MCF 10A (cell line): ENCODE measurements at regions of chr1 and their contacts with region 1.

Region 1: DNA sequence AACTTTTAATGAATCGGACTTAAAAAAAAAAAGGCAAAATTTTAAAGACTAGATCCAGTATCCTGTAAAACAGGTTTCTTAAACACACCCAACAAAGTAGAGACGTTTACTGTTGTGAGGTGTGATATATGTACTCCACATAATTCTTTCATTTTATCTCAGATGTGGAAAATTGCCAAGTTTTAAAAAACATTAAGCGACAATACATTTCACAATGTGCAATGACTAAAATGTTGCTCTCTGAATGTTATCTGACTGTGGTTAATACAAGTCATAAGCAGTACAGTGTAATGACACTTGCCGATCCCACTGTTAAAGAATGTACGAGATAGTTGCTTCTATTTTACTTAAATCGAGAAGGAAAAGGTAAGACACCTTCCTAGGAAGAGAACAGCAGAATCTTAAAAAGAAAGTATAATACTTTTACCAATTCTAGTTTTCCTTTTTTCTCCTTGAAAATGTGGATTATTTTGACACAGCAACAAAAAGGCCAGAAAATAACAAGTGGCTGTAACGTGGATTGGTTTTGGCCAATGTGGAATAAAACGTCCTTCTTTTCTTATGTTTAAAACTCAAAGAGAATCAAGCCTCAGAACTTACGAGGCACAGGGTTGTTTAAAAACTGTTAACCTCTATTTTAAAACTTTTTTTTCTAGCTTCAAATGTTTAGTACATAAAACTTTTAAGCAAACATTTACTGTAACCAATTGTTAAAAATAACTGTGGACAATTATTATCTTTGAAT is 51.4 kb downstream of the TP53BP2 start:
- DNase-seq: no peak
- H3K4me3 Mint-ChIP-seq: no peak overlapping the region
- H3K27ac Mint-ChIP-seq: no peak overlapping the region
- H3K4me1 Mint-ChIP-seq: no peaks in the 10 kb centered on the region
- H3K27me3 Mint-ChIP-seq: no peaks in the 10 kb centered on the region
- CTCF ChIP-seq: no peak

Region 2: DNA sequence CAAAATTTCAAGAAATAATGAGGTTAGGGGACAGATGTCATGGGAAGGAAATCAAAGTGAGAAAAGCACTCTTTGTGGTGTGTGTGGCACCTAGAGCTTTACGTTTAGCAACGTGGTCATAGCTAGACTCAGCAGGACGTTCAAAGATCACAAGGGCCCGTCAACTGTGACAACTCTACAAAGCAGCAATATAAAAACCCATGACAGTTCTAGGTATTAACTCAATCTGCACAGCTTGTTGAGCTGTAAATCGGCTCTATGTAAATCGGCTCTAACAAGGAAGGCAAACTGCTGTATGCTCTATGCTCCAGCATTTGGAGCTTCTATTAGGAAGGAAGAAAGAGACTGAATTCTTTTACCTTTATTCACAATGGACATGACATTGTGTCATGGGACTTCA is 13.4 kb before region 1 on chr1:
- CTCF ChIA-PET with region 1: interaction called, 6 read pairs
- POLR2A ChIA-PET with region 1: interaction called, 12 read pairs
- intact Hi-C with region 1: no loop called
- DNase-seq: no peak
- H3K4me3 Mint-ChIP-seq: no peak overlapping the region
- H3K27ac Mint-ChIP-seq: no peak overlapping the region
- H3K4me1 Mint-ChIP-seq: peaks cover 17% of the 10 kb centered on the region
- H3K27me3 Mint-ChIP-seq: no peaks in the 10 kb centered on the region
- CTCF ChIP-seq: no peak